ENCODE measurements at regions of chrX and their contacts with region 1.

Region 1: GRCh38 chrX:49896951-49897350 is 17.7 kb downstream of the USP27X start:
- DNase-seq: no peak
- ATAC-seq: no peak
- H3K4me3 Mint-ChIP-seq: no peak overlapping the region
- H3K27ac Mint-ChIP-seq: no peak overlapping the region
- H3K4me1 Mint-ChIP-seq: no peaks in the 10 kb centered on the region
- H3K27me3 Mint-ChIP-seq: peaks cover 17% of the 10 kb centered on the region
- CTCF ChIP-seq: no peak

Region 2: DNA sequence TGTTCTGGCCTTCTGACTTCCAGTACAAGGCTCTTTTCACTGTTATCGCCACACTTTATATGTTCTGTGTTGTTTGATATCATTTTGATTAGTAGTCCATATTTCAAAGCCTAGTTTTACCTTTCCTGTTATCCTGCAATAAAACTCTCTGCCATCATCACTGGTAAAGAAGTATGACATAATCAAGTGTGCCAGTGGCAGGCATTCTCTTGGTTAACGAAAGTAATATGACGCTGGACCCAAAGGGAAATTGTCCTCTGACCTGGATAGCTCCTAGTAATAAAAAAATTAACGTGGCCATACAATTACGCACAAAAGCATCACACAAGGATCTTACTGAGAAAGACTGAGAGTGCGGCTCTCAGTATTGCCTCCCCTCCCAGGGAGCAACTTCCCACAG is 539.8 kb after region 1 on chrX:
- CTCF ChIA-PET with region 1: no interaction called
- POLR2A ChIA-PET with region 1: no interaction called
- intact Hi-C with region 1: loop called (anchors 5 kb)
- DNase-seq: no peak
- ATAC-seq: no peak
- H3K4me3 Mint-ChIP-seq: no peak overlapping the region
- H3K27ac Mint-ChIP-seq: no peak overlapping the region
- H3K4me1 Mint-ChIP-seq: no peaks in the 10 kb centered on the region
- H3K27me3 Mint-ChIP-seq: no peaks in the 10 kb centered on the region
- CTCF ChIP-seq: no peak